ENCODE measurements at regions of chr20 and their contacts with region 1.

Region 1: GRCh38 chr20:32908334-32909292 is 49.9 kb downstream of the EFCAB8 start:
- DNase-seq: no peak
- H3K4me3 ChIP-seq: no peak overlapping the region
- H3K27ac ChIP-seq: no peak overlapping the region
- H3K4me1 ChIP-seq: no peaks in the 10 kb centered on the region
- H3K27me3 ChIP-seq: no peaks in the 10 kb centered on the region
- CTCF ChIP-seq: no peak
- POLR2A ChIP-seq: no peak

Region 2: DNA sequence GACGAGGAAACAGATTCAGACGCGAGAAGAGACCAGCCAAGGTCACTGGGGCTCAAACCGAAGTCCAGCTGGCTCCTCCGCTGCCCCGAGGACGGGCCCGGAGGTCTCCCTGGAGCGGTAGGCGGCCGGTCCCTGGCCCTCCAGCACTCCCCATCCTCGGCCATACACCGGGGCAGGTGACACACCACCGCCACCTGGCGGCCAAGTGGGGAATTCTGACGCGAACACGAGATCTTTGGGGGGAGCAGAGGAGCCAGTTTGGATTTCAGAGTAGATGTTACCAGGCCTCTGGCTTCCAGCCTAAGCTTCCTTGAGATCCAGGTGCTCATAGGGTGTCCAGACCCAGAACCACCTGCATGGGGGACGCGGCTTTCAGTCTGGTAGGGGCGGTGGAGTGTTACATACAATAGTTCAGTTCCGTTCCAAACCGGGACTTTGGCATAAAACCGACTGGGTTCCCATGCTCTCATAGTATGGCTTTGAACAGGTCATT is 390.5 kb after region 1 on chr20:
- intact Hi-C with region 1: loop called (anchors 5 kb)
- DNase-seq: peak; percentile 60 to 68
- H3K4me3 ChIP-seq: no peak overlapping the region
- H3K27ac ChIP-seq: no peak overlapping the region
- H3K4me1 ChIP-seq: peaks cover 0 to 5% of the 10 kb centered on the region in 2 donors
- H3K27me3 ChIP-seq: no peaks in the 10 kb centered on the region
- CTCF ChIP-seq: peak; percentile 75 to 94 (median 80)
- POLR2A ChIP-seq: no peak

Measured in thyroid gland (tissue), 4 donors.